Activated B cell treated with CpG ODN at 0.5 μM for 24 hours (primary cell): ENCODE measurements at regions of chr14 and their contacts with region 1.

Region 1: DNA sequence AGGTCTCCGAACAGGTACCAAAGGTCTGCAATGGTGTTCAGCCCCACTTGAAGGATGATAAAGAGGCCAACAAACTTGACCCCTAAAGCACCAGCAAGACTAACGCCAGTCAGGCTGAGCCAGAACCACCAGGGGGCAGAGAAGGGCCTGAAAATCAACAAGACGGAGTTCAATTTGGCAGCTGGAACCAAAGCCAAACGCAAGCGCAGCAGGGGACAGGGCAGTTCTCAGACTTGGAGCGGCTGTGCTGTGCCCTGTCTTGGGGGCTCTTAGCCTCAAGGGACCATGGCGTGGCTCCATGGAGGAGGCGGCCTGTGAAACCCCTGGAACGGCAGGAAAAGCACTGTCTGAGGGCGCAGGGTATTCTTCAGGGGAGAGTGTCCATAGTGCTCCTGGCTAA is 19.6 kb downstream of the POMT2 start:
- DNase-seq: peak; percentile 32
- ATAC-seq: peak; percentile 74
- H3K4me3 Mint-ChIP-seq: no peak overlapping the region
- H3K27ac Mint-ChIP-seq: no peak overlapping the region
- H3K4me1 Mint-ChIP-seq: no peaks in the 10 kb centered on the region
- H3K27me3 Mint-ChIP-seq: no peaks in the 10 kb centered on the region
- CTCF ChIP-seq: no peak

Region 2: GRCh38 chr14:77139540-77140358 is 161.4 kb before region 1 on chr14:
- CTCF ChIA-PET with region 1: no interaction called
- POLR2A ChIA-PET with region 1: no interaction called
- intact Hi-C with region 1: loop called (anchors 5 kb)
- DNase-seq: peak; percentile 56
- ATAC-seq: peak; percentile 74
- H3K4me3 Mint-ChIP-seq: peak overlapping the region; percentile 76
- H3K27ac Mint-ChIP-seq: no peak overlapping the region
- H3K4me1 Mint-ChIP-seq: peaks cover 26% of the 10 kb centered on the region
- H3K27me3 Mint-ChIP-seq: peaks cover 64% of the 10 kb centered on the region
- CTCF ChIP-seq: no peak

Region 3: GRCh38 chr14:77275601-77276017 is 25.5 kb before region 1 on chr14:
- CTCF ChIA-PET with region 1: no interaction called
- POLR2A ChIA-PET with region 1: no interaction called
- intact Hi-C with region 1: no loop called
- DNase-seq: no peak
- ATAC-seq: no peak
- H3K4me3 Mint-ChIP-seq: no peak overlapping the region
- H3K27ac Mint-ChIP-seq: no peak overlapping the region
- H3K4me1 Mint-ChIP-seq: no peaks in the 10 kb centered on the region
- H3K27me3 Mint-ChIP-seq: peaks cover 18% of the 10 kb centered on the region
- CTCF ChIP-seq: no peak

Region 4: GRCh38 chr14:77314043-77314442 is 12.9 kb after region 1 on chr14:
- CTCF ChIA-PET with region 1: interaction called, 30 read pairs
- POLR2A ChIA-PET with region 1: no interaction called
- intact Hi-C with region 1: loop called (anchors 1 kb)
- DNase-seq: no peak
- ATAC-seq: no peak
- H3K4me3 Mint-ChIP-seq: no peak overlapping the region
- H3K27ac Mint-ChIP-seq: no peak overlapping the region
- H3K4me1 Mint-ChIP-seq: peaks cover 4% of the 10 kb centered on the region
- H3K27me3 Mint-ChIP-seq: no peaks in the 10 kb centered on the region
- CTCF ChIP-seq: no peak

Region 5: DNA sequence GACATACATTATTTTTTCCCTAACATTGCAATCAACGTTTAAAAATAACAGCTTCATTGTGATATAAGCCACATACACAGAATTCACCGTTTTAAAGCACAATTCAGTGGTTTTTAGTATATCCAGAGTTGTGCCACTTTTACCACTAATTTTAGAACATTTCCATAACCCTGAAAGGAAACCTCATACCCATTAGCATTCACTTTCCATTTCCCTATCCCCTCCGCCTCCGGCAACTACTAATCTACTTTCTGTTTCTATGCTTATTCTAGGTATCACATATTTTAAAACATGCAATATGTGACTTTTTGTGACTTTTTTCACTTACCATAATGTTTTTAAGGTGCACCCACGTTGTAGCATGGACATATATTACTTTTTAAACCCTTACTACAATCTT is 253.1 kb after region 1 on chr14:
- CTCF ChIA-PET with region 1: interaction called, 9 read pairs
- POLR2A ChIA-PET with region 1: no interaction called
- intact Hi-C with region 1: loop called (anchors 1 kb)
- DNase-seq: no peak
- ATAC-seq: no peak
- H3K4me3 Mint-ChIP-seq: no peak overlapping the region
- H3K27ac Mint-ChIP-seq: peak overlapping the region; percentile 43
- H3K4me1 Mint-ChIP-seq: no peaks in the 10 kb centered on the region
- H3K27me3 Mint-ChIP-seq: no peaks in the 10 kb centered on the region
- CTCF ChIP-seq: no peak

Region 6: DNA sequence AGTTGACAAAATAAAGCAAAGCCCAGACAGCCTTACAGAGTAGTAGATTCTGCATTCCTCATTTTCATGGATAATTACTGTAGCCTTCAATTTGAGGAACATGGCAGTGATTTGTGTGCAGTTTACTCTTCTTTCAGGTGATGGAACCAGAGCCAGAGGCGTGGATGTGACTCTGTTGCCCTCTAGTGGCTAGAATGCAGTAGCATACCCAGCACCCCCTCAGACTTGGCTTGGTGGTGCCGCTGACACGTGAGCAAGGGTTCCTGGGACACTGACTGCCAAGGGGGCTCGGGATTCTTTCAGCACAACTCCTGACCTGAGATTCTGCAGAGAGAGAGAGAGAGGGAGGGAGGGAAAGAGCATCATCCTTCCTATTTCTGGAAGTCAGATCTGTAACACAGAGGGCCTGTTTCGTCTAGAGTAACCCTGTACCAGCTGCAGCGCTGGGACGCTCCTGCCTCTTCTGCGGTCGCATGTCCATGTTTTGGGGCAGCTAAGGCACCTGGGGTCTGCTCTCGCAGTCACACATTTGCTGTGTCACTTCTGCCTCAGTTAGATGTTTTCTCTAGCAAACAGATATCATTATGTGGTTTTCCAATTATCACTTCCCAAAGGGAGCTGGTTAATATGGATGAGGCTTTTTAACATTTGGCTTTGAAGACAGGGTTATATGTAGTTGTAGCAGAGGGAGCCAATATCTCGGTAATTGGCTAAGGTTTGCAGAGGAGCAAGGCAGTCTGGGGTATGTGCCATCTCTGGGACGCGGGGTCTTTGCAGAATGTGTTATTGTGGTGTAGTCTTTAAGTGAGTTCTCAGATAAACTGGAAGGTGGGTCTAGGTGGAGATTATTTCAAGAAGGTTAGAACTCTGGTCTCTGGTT is 1297.2 kb after region 1 on chr14:
- CTCF ChIA-PET with region 1: no interaction called
- POLR2A ChIA-PET with region 1: no interaction called
- intact Hi-C with region 1: loop called (anchors 10 kb)
- DNase-seq: peak; percentile 16
- ATAC-seq: peak; percentile 52
- H3K4me3 Mint-ChIP-seq: no peak overlapping the region
- H3K27ac Mint-ChIP-seq: no peak overlapping the region
- H3K4me1 Mint-ChIP-seq: no peaks in the 10 kb centered on the region
- H3K27me3 Mint-ChIP-seq: peaks cover 1% of the 10 kb centered on the region
- CTCF ChIP-seq: peak; percentile 43